ENCODE measurements at regions of chr9 and their contacts with region 1.

Region 1: DNA sequence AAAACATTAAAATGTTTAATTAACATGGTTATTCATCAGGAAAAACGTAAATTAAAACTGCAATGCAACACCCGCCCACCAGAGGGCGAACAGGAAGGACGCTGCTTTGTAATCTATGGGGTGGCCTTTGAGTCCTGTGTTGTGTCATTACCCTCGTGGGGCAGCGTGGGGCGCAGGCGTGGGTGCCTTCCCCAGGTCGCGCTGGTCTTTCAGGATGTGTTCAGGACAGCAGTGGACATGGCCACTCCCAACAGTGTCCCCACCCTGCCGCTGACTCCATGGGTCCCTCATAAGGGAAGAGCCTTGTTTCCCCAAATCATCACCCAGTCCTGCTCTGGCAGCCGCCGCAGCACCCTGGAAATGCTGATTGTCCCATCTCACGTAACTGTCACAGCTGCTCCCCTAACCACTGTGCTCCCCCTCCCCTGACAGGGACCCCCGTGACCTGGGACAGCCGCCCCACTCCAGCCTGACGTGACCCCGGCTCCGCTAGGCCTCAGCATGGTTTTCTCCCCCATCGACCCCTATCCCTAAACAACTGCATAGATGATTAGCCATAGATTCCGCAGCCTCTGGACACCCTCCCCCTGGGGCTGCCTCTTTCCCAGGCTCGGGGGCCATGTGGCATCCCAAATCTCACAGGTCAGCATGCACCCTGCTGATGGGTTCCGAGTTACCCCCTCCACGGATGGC is 36.4 kb downstream of the GLT6D1 start:
- DNase-seq: peak; percentile 54 to 62
- H3K4me3 ChIP-seq: no peak overlapping the region
- H3K4me3 Mint-ChIP-seq: no peak overlapping the region
- H3K27ac Mint-ChIP-seq: no peak overlapping the region
- H3K4me1 ChIP-seq: no peaks in the 10 kb centered on the region
- H3K4me1 Mint-ChIP-seq: no peaks in the 10 kb centered on the region
- H3K27me3 ChIP-seq: no peaks in the 10 kb centered on the region
- H3K27me3 Mint-ChIP-seq: no peaks in the 10 kb centered on the region
- CTCF ChIP-seq: peak; percentile 63 to 91

Region 2: DNA sequence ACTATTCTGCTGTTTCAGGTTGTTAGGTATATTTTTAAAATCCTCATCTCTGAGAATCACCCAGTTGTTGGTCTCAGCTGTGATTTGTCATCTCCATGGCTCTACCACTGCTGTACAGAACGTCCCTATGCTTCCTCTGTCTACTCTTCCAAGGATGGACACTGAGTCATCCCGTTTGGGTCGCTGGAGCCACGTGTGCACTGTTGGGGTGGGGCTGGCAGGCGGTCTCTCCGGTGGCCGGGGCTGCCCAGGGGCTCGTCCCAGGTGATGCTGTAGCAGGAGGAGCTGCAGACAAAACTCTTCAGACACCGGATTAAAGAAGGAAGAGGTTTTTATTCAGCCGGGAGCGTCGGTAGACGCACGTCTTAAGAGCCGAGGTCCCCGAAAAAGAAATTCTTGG is 77.1 kb after region 1 on chr9:
- CTCF ChIA-PET with region 1: no interaction called
- POLR2A ChIA-PET with region 1: no interaction called
- intact Hi-C with region 1: loop called (anchors 5 kb)
- DNase-seq: no peak
- H3K4me3 ChIP-seq: no peak overlapping the region
- H3K4me3 Mint-ChIP-seq: no peak overlapping the region
- H3K27ac Mint-ChIP-seq: no peak overlapping the region
- H3K4me1 ChIP-seq: no peaks in the 10 kb centered on the region
- H3K4me1 Mint-ChIP-seq: no peaks in the 10 kb centered on the region
- H3K27me3 ChIP-seq: no peaks in the 10 kb centered on the region
- H3K27me3 Mint-ChIP-seq: peaks cover 4% of the 10 kb centered on the region
- CTCF ChIP-seq: no peak

Region 3: DNA sequence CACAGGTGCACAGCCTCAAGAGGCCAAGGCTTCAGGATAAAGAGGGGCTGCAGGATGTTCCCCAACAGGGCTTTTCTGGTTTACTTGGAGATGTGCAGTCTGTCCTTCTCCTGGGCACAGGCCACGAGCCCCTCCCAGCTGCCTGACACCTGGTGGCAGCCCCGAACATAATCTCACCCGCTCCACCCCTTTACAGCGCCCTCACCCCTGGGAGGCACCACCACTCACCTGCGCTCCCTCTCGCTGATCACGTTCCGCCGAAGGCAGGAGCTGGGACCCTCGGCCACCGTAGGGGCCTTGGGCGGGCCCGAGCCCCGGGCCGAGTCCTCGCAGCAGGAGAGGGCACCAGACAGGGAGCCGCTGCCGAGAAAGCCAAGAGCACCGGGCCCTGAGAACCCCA is 95.8 kb after region 1 on chr9:
- CTCF ChIA-PET with region 1: interaction called, 3 read pairs
- POLR2A ChIA-PET with region 1: no interaction called
- intact Hi-C with region 1: loop called (anchors 1 kb)
- DNase-seq: peak; percentile 71 to 74
- H3K4me3 ChIP-seq: peak overlapping the region; percentile 67
- H3K4me3 Mint-ChIP-seq: peak overlapping the region; percentile 77
- H3K27ac Mint-ChIP-seq: peak overlapping the region; percentile 69
- H3K4me1 ChIP-seq: peaks cover 17% of the 10 kb centered on the region
- H3K4me1 Mint-ChIP-seq: no peaks in the 10 kb centered on the region
- H3K27me3 ChIP-seq: no peaks in the 10 kb centered on the region
- H3K27me3 Mint-ChIP-seq: no peaks in the 10 kb centered on the region
- CTCF ChIP-seq: peak in 1 of 2 experiments; percentile 61